Heart left ventricle (tissue), 16 donors: ENCODE measurements at regions of chr5 and their contacts with region 1.

Region 1: GRCh38 chr5:150846654-150847333 is 473 bp downstream of the IRGM start:
- DNase-seq: peak in 4 of 5 donors; percentile 31 to 56 (median 48)
- ATAC-seq: peak; percentile 73 to 91 (median 90)
- H3K4me3 ChIP-seq: peak overlapping the region in 1 of 12 donors; percentile 6
- H3K27ac ChIP-seq: no peak overlapping the region
- H3K4me1 ChIP-seq: peaks cover 0 to 7% (median 0%) of the 10 kb centered on the region in 12 donors
- H3K27me3 ChIP-seq: peaks cover 0 to 4% (median 0%) of the 10 kb centered on the region in 9 donors
- CTCF ChIP-seq: peak; percentile 38 to 80 (median 68)
- POLR2A ChIP-seq: no peak

Region 2: GRCh38 chr5:150458819-150459557 is 387.8 kb before region 1 on chr5:
- intact Hi-C with region 1: loop called in 5 of 10 experiments (anchors 5 to 10 kb)
- DNase-seq: peak; percentile 75 to 90 (median 80)
- ATAC-seq: peak; percentile 86 to 96 (median 92)
- H3K4me3 ChIP-seq: peak overlapping the region in 8 of 12 donors; percentile 15 to 46 (median 36)
- H3K27ac ChIP-seq: peak overlapping the region in 2 of 12 donors; percentile 2 to 53
- H3K4me1 ChIP-seq: peaks cover 0 to 14% (median 4%) of the 10 kb centered on the region in 12 donors
- H3K27me3 ChIP-seq: no peaks in the 10 kb centered on the region
- CTCF ChIP-seq: peak; percentile 68 to 97 (median 82)
- POLR2A ChIP-seq: no peak

Region 3: GRCh38 chr5:150700594-150701293 is 146.1 kb before region 1 on chr5 and contains the start of gene RBM22:
- intact Hi-C with region 1: loop called in 4 of 10 experiments (anchors 5 to 10 kb)
- DNase-seq: peak; percentile 93 to 97 (median 95)
- ATAC-seq: peak; percentile 97 to 100 (median 99)
- H3K4me3 ChIP-seq: peak within 1 kb of the TSS; percentile 73 to 99 (median 94)
- H3K27ac ChIP-seq: peak within 1 kb of the TSS; percentile 92 to 99 (median 98)
- H3K4me1 ChIP-seq: peaks cover 0 to 24% (median 16%) of the 10 kb centered on the region in 12 donors
- H3K27me3 ChIP-seq: no peaks in the 10 kb centered on the region
- CTCF ChIP-seq: peak; percentile 43 to 81 (median 62)
- POLR2A ChIP-seq: peak in 1 of 2 donors; percentile 87
- total RNA-seq, gene RBM22: 23.5 to 42.3 (median 28.0) TPM

Region 4: DNA sequence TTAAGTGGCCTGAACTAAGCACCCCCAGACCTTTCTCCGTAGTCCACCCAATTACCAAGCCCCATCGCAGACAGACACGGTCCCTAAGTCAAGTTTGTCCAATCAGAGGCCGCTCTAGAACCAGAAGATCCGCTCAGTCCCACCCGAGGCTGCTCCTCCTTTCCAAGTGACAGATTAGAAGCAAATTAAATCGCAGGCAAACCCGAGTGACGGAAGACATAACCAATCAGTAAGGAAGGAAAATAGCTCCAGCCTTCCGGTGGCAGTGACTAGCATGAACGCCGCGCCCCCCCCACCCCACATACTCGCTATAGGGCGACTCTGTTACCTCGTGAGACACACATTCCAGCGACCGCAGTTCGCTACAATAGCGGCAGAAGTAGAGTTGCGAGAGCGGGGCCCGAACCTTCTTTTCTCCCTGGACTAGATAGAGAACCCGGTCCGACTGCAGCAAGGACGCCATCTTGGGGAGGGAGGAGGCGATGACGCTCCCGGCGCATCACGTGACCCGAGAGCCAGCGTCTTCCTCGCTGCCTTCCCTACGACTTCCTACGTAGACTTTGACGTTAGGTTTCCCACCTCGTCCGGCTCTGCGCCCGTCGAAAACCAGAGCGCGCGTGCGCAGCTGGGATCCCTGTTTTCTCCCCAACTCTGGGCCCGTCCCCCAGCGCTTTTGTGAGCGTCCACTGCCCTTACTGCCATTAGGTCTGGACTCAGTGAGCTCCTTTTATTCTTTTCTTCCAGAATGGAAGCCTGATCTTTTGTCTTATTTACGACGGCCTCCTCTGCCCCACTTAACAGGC is 88.1 kb before region 1 on chr5 and contains the start of gene DCTN4:
- intact Hi-C with region 1: loop called in 1 of 10 experiments (anchors 10 kb)
- DNase-seq: peak; percentile 97 to 98 (median 97)
- ATAC-seq: peak; percentile 93 to 99 (median 96)
- H3K4me3 ChIP-seq: peak within 1 kb of the TSS; percentile 43 to 88 (median 73)
- H3K27ac ChIP-seq: peak within 1 kb of the TSS; percentile 90 to 98 (median 96)
- H3K4me1 ChIP-seq: peaks cover 6 to 60% (median 17%) of the 10 kb centered on the region in 12 donors
- H3K27me3 ChIP-seq: no peaks in the 10 kb centered on the region
- CTCF ChIP-seq: peak in 4 of 12 donors; percentile 12 to 47 (median 20)
- POLR2A ChIP-seq: peak in 1 of 2 donors; percentile 59
- total RNA-seq, gene DCTN4: 41.6 to 70.6 (median 50.4) TPM

Region 5: GRCh38 chr5:150809363-150809762 is 37.4 kb before region 1 on chr5:
- intact Hi-C with region 1: loop called in 6 of 10 experiments (anchors 5 kb)
- DNase-seq: no peak
- ATAC-seq: no peak
- H3K4me3 ChIP-seq: no peak overlapping the region
- H3K27ac ChIP-seq: no peak overlapping the region
- H3K4me1 ChIP-seq: no peaks in the 10 kb centered on the region
- H3K27me3 ChIP-seq: no peaks in the 10 kb centered on the region
- CTCF ChIP-seq: no peak
- POLR2A ChIP-seq: no peak

Region 6: DNA sequence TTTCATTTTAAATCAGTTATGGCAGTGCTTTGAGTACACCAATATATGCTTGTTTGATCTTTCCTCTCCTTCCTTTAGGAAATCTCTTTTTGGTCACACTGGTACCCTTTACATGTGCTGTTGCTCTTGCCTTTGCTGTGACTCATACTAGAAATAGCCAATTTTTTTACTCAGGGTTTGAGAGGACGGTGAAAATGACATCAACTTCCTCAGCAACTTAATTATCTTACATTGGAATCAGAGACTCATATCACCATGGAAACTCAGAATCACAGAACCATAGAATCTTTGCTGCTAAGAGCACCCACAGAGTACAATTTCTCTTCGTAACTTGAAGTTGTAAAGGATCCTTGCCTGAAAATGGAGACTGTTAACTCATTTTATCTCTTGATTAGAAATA is 71.8 kb after region 1 on chr5:
- intact Hi-C with region 1: no loop called
- DNase-seq: no peak
- ATAC-seq: no peak
- H3K4me3 ChIP-seq: no peak overlapping the region
- H3K27ac ChIP-seq: no peak overlapping the region
- H3K4me1 ChIP-seq: no peaks in the 10 kb centered on the region
- H3K27me3 ChIP-seq: no peaks in the 10 kb centered on the region
- CTCF ChIP-seq: no peak
- POLR2A ChIP-seq: no peak